Activated CD4-positive, alpha-beta T cell treated with anti-CD3 and anti-CD28 coated beads for 36 hours (primary cell): ENCODE measurements at regions of chr17 and their contacts with region 1.

Region 1: GRCh38 chr17:7383742-7384488 is 3.0 kb downstream of the TNK1 start:
- DNase-seq: peak; percentile 87
- ATAC-seq: peak; percentile 97
- H3K4me3 Mint-ChIP-seq: peak overlapping the region; percentile 73
- H3K27ac Mint-ChIP-seq: peak overlapping the region; percentile 70
- H3K4me1 Mint-ChIP-seq: peaks cover 10% of the 10 kb centered on the region
- H3K27me3 Mint-ChIP-seq: peaks cover 31% of the 10 kb centered on the region

Region 2: GRCh38 chr17:7191571-7192270 is 192.2 kb before region 1 on chr17:
- CTCF ChIA-PET with region 1: no interaction called
- POLR2A ChIA-PET with region 1: no interaction called
- intact Hi-C with region 1: no loop called
- DNase-seq: peak; percentile 61
- ATAC-seq: peak; percentile 72
- H3K4me3 Mint-ChIP-seq: no peak overlapping the region
- H3K27ac Mint-ChIP-seq: no peak overlapping the region
- H3K4me1 Mint-ChIP-seq: no peaks in the 10 kb centered on the region
- H3K27me3 Mint-ChIP-seq: no peaks in the 10 kb centered on the region

Region 3: DNA sequence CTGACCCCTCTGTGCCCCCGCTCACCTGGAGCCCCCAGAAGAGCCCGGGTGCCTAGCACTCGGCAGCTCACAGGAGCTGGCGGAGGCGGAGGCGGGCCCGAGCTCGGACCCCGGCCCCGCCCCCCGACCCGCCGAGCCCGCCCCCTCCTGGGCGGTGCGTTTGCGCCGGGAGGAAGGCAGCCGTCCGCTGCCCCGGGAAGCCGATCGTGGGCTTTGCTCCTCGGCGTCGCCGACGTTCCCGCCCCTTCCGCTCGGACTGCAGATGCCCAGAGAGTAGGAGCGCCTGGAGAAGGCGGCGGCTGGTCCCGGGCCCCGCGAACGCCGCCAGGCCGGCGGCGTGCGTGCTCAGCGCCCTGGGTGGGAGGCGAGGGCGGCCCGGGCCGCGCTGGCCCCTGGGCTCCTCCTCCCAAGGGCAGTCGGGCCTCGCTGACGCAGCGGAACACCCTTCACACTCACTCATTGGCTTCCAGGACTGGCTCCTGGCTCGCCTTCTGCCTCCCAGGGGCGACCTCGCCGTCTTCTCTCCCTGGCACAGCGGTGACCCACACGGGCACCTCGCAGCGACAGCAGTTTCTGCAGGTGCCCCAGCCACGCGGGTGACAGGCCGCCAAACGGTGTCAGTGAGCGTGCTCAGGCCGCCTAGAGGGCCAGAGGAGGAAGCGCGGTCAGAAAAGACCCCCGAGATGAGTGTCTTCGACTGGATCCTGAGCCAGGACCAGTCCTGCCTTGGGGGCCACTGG is 10.7 kb after region 1 on chr17 and contains the start of gene PLSCR3:
- CTCF ChIA-PET with region 1: no interaction called
- POLR2A ChIA-PET with region 1: interaction called, 3 read pairs
- intact Hi-C with region 1: loop called (anchors 1 kb)
- DNase-seq: peak; percentile 90
- ATAC-seq: peak; percentile 86
- H3K4me3 Mint-ChIP-seq: peak within 1 kb of the TSS; percentile 88
- H3K27ac Mint-ChIP-seq: peak within 1 kb of the TSS; percentile 95
- H3K4me1 Mint-ChIP-seq: peaks cover 26% of the 10 kb centered on the region
- H3K27me3 Mint-ChIP-seq: no peaks in the 10 kb centered on the region
- total RNA-seq, gene PLSCR3: 69.3 to 78.9 TPM